MCF 10A (cell line): ENCODE measurements at regions of chr20 and their contacts with region 1.

Region 1: GRCh38 chr20:41232973-41233926 is 84.3 kb downstream of the ZHX3 start:
- DNase-seq: peak; percentile 73
- H3K4me3 Mint-ChIP-seq: peak overlapping the region; percentile 52
- H3K27ac Mint-ChIP-seq: peak overlapping the region; percentile 97
- H3K4me1 Mint-ChIP-seq: peaks cover 33% of the 10 kb centered on the region
- H3K27me3 Mint-ChIP-seq: no peaks in the 10 kb centered on the region
- CTCF ChIP-seq: no peak

Region 2: GRCh38 chr20:40851051-40851450 is 382.2 kb before region 1 on chr20:
- CTCF ChIA-PET with region 1: no interaction called
- POLR2A ChIA-PET with region 1: no interaction called
- intact Hi-C with region 1: no loop called
- DNase-seq: no peak
- H3K4me3 Mint-ChIP-seq: no peak overlapping the region
- H3K27ac Mint-ChIP-seq: no peak overlapping the region
- H3K4me1 Mint-ChIP-seq: no peaks in the 10 kb centered on the region
- H3K27me3 Mint-ChIP-seq: no peaks in the 10 kb centered on the region
- CTCF ChIP-seq: no peak

Region 3: DNA sequence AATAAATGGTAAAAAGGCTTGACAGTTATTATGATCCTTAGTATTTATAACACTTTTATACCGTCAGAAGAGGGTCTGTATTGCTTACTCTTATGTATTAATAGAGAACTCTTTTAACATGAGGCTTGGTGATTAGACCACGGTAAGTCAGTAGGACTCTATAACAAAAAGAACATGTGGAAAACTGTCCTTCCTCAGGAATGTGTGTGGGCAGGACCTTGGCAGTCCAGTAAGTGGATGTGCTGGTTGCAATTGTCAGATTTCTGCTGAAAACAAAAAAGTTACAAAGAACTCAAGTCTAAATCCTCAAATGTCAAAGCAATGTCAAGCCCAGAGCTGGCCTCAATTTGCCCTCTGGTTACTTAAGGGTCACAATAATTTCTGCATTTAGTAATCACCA is 14.8 kb before region 1 on chr20:
- CTCF ChIA-PET with region 1: interaction called, 19 read pairs
- POLR2A ChIA-PET with region 1: interaction called, 10 read pairs
- intact Hi-C with region 1: no loop called
- DNase-seq: no peak
- H3K4me3 Mint-ChIP-seq: no peak overlapping the region
- H3K27ac Mint-ChIP-seq: no peak overlapping the region
- H3K4me1 Mint-ChIP-seq: peaks cover 13% of the 10 kb centered on the region
- H3K27me3 Mint-ChIP-seq: no peaks in the 10 kb centered on the region
- CTCF ChIP-seq: no peak

Region 4: GRCh38 chr20:41249406-41250281 is 16.4 kb after region 1 on chr20:
- CTCF ChIA-PET with region 1: interaction called, 84 read pairs
- POLR2A ChIA-PET with region 1: interaction called, 102 read pairs
- intact Hi-C with region 1: no loop called
- DNase-seq: peak; percentile 82
- H3K4me3 Mint-ChIP-seq: peak overlapping the region; percentile 26
- H3K27ac Mint-ChIP-seq: peak overlapping the region; percentile 97
- H3K4me1 Mint-ChIP-seq: peaks cover 41% of the 10 kb centered on the region
- H3K27me3 Mint-ChIP-seq: no peaks in the 10 kb centered on the region
- CTCF ChIP-seq: peak; percentile 21

Region 5: GRCh38 chr20:41299899-41300298 is 66.6 kb after region 1 on chr20:
- CTCF ChIA-PET with region 1: no interaction called
- POLR2A ChIA-PET with region 1: no interaction called
- intact Hi-C with region 1: no loop called
- DNase-seq: no peak
- H3K4me3 Mint-ChIP-seq: no peak overlapping the region
- H3K27ac Mint-ChIP-seq: no peak overlapping the region
- H3K4me1 Mint-ChIP-seq: peaks cover 3% of the 10 kb centered on the region
- H3K27me3 Mint-ChIP-seq: no peaks in the 10 kb centered on the region
- CTCF ChIP-seq: no peak

Region 6: DNA sequence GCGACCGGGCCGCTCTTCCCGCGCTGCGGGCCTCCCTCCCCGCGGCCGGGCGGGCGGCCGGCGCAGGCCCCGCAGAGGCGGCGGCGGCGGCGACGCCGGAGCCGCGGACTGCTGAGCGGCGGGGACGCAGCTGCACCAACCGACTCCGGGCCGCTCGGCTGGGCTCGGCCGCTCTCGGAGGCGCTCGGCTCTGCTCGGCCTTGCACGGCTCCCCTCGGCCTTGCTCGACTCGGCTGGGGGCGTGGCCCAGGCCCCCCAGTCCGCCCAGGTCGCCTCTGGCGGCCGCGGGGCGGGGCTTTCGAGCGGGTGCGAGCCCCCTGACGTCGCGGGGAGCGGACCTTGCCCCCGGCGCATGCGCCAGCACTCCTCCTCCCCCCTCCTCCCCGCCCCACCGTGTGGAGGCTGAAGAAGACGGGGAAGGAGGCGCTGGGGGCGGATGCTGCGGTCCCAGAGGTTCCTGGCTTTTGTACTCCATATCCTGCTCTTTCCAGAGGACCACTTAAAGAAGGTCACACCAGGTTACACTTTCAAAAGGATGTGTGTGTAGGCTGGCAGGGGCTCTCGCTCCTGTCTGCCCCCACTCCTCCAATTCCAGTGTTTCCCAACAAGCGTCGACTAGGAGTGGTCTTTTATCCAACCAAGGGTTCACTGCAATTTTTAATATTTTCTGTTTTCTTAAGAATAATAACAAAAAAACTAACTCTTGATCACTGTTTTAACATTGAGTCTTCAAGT is 84.5 kb after region 1 on chr20 and contains the start of gene ZHX3:
- CTCF ChIA-PET with region 1: interaction called, 12 read pairs
- POLR2A ChIA-PET with region 1: interaction called, 21 read pairs
- intact Hi-C with region 1: loop called (anchors 2 kb)
- DNase-seq: peak; percentile 96
- H3K4me3 Mint-ChIP-seq: peak within 1 kb of the TSS; percentile 99
- H3K27ac Mint-ChIP-seq: peak within 1 kb of the TSS; percentile 63
- H3K4me1 Mint-ChIP-seq: peaks cover 29% of the 10 kb centered on the region
- H3K27me3 Mint-ChIP-seq: no peaks in the 10 kb centered on the region
- CTCF ChIP-seq: no peak
- total RNA-seq, gene ZHX3: 23.8 and 34.1 TPM in 2 replicates

Region 7: DNA sequence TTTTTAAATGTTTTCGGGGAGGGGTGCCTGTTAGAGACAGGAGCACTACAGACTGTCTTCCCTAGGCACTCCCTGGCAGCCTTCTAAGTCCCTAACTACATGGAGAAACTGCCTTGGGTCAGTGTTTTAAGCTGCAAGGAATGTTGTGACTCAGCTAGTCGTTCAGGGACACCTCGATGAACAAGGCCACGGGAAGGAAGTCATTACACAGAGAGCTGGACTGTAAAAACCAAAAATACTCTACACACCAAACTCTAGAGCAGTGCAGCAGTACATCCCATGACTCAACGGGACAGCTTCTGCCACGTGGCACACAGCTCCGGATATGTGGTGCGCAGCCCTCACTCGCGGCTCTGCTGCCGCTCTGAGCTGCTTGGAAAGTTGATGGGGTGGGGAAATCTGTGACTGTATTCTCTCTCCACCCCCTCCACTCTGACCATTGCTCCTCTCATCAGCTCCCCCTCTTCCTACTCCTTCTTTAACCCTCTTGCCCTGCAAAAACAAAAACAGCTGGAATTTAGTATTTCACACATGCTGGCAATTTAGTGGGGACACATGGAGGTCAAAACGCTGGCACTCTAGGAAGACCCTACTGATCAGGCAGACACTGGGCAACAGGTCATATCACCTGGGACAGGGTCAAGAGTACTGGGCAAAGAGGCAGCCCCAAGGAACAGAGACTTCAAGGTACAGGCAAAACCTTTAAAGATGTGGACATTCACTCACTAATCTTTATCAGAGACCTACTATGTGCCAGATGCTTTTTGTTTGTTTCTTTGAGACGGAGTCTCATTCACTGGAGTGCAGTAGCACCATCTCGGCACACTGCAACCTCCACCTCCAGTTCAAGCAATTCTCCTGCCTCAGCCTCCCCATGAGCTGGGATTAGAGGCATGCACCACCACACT is 96.4 kb after region 1 on chr20:
- CTCF ChIA-PET with region 1: interaction called, 8 read pairs
- POLR2A ChIA-PET with region 1: interaction called, 20 read pairs
- intact Hi-C with region 1: no loop called
- DNase-seq: peak; percentile 92
- H3K4me3 Mint-ChIP-seq: peak overlapping the region; percentile 28
- H3K27ac Mint-ChIP-seq: peak overlapping the region; percentile 89
- H3K4me1 Mint-ChIP-seq: peaks cover 15% of the 10 kb centered on the region
- H3K27me3 Mint-ChIP-seq: no peaks in the 10 kb centered on the region
- CTCF ChIP-seq: no peak

Region 8: GRCh38 chr20:41509316-41510200 is 276.3 kb after region 1 on chr20:
- CTCF ChIA-PET with region 1: no interaction called
- POLR2A ChIA-PET with region 1: no interaction called
- intact Hi-C with region 1: no loop called
- DNase-seq: peak; percentile 24
- H3K4me3 Mint-ChIP-seq: no peak overlapping the region
- H3K27ac Mint-ChIP-seq: no peak overlapping the region
- H3K4me1 Mint-ChIP-seq: no peaks in the 10 kb centered on the region
- H3K27me3 Mint-ChIP-seq: no peaks in the 10 kb centered on the region
- CTCF ChIP-seq: no peak